Activated CD8-positive, alpha-beta memory T cell treated with anti-CD3 and anti-CD28 coated beads, Interleukin-2, amount 10 ng/mL, durations not matched to agents 7 days and 5 days (primary cell): ENCODE measurements at regions of chr6 and their contacts with region 1.

Region 1: DNA sequence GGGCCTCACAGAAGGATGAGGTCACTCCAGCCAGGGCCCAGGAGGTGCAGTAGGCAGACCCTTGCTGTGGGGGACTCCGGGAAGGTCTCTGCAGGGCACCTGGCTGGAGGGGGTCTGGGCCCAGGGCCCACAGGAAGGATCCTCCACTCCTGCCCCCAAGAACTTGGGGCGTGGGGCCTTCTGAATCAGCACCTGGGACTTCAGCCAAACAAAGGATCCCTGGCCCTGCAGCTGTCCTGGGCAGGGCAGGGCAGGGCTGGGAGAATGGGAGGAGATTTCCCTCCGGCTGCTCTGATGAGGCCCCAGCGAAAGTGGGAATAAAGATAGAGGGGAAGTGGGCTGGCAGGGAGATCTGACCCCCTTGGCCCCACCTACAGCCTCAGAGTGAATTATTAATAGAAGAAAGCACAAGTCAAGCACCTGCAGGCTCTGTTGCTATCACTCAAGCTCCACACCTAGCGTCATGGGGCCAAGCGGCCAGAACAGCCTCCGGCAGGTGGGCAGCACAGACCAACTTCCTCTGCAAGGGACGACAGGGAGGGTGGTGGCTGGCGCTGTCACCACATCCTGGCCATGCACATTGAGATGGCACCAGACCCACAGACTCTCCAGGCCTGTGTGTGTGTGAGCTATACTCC is 61.6 kb upstream of the MRPS10 start:
- DNase-seq: peak; percentile 77
- ATAC-seq: peak; percentile 65
- H3K4me3 Mint-ChIP-seq: peak overlapping the region; percentile 27
- H3K27ac Mint-ChIP-seq: peak overlapping the region; percentile 90
- H3K4me1 Mint-ChIP-seq: peaks cover 66% of the 10 kb centered on the region
- H3K27me3 Mint-ChIP-seq: no peaks in the 10 kb centered on the region

Region 2: DNA sequence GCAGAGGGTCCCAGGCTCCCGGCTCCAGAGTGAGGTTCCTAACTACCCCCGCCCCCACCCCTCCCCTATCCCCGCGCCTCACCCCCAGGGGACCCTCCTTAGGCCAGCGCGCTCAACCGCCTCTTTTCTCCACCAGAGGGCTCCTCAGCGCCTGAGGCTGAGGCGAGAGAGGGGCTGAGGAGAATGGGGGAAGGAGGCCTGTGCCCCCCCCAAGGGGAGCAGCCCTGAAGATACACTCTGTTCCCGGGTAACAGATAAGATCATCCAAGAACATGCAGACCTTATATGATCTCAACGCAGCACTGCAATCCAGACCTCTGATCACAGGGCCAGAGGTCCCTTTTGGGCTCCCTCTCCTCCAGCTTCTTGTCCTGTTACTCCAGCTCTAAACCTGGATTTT is 18.3 kb before region 1 on chr6:
- CTCF ChIA-PET with region 1: interaction called, 12 read pairs
- DNase-seq: no peak
- ATAC-seq: peak; percentile 66
- H3K4me3 Mint-ChIP-seq: no peak overlapping the region
- H3K27ac Mint-ChIP-seq: peak overlapping the region; percentile 49
- H3K4me1 Mint-ChIP-seq: peaks cover 12% of the 10 kb centered on the region
- H3K27me3 Mint-ChIP-seq: no peaks in the 10 kb centered on the region

Region 3: DNA sequence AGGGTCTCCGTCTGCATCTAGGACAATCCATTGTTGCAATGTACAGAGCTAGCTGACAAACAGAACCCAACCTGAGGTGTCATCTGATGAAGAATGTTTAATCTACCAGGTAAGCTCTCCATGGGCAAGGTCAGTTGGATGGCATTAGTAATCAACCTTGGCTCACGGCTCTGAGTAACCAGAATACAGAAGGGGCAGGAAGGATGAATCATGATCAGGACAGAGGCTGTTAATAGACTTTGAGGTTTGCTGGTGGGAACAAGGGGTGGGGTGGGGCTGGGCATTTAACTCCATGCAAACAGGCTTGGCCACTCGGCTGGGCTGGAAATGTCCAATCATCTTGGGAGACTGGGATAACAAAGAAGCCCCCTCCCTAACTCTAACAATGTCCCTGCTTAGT is 15.5 kb after region 1 on chr6:
- CTCF ChIA-PET with region 1: interaction called, 11 read pairs
- DNase-seq: no peak
- ATAC-seq: peak; percentile 31
- H3K4me3 Mint-ChIP-seq: no peak overlapping the region
- H3K27ac Mint-ChIP-seq: peak overlapping the region; percentile 79
- H3K4me1 Mint-ChIP-seq: peaks cover 67% of the 10 kb centered on the region
- H3K27me3 Mint-ChIP-seq: no peaks in the 10 kb centered on the region

Region 4: DNA sequence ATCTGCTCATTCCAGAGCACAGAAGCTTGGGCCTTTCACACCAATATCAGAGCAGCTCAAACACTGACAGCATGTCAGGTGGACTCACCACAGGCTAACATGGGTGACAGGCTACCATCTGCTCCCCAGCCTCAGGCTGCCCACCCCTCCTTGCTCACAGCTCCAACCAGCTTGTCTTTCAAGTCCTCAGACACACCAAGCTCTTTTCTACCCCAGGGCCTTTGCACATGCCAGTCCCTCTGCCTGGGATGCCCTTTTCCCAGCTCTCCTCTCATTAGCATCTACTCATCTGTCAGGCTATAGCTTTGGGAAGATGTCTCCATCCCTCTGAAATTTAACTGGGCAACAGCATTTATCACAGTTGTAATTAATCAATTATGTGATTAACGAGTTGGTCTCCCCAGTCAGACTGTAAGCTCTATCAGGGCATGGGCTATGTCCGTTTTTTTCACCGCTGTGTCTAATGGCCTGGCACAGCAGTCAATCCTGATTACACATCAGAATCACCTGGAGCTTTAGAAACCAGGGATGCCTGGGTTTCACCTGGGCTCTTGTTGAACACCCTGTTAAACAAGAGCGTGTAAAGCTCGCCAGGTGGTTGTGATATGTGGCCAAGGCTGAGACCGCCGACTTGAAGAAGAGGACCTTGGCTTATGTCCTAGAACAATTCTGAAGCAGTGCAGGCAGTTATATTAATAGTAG is 27.3 kb after region 1 on chr6:
- CTCF ChIA-PET with region 1: no interaction called
- DNase-seq: no peak
- ATAC-seq: no peak
- H3K4me3 Mint-ChIP-seq: no peak overlapping the region
- H3K27ac Mint-ChIP-seq: peak overlapping the region; percentile 22
- H3K4me1 Mint-ChIP-seq: peaks cover 18% of the 10 kb centered on the region
- H3K27me3 Mint-ChIP-seq: no peaks in the 10 kb centered on the region